Ascending aorta (tissue), 2 donors: ENCODE measurements at regions of chr12 and their contacts with region 1.

Region 1: GRCh38 chr12:12704593-12705230 is 8.7 kb upstream of the GPR19 start:
- DNase-seq: peak in 1 of 2 donors; percentile 80
- H3K4me3 ChIP-seq: no peak overlapping the region
- H3K27ac ChIP-seq: no peak overlapping the region
- H3K4me1 ChIP-seq: peaks cover 0 to 5% of the 10 kb centered on the region in 2 donors
- H3K27me3 ChIP-seq: no peaks in the 10 kb centered on the region
- CTCF ChIP-seq: peak; percentile 88 to 96 (median 90)

Region 2: GRCh38 chr12:11553871-11554533 is 1150.7 kb before region 1 on chr12:
- intact Hi-C with region 1: loop called (anchors 10 kb)
- DNase-seq: peak in 1 of 2 donors; percentile 78
- H3K4me3 ChIP-seq: no peak overlapping the region
- H3K27ac ChIP-seq: no peak overlapping the region
- H3K4me1 ChIP-seq: peaks cover 0 to 12% of the 10 kb centered on the region in 2 donors
- H3K27me3 ChIP-seq: no peaks in the 10 kb centered on the region
- CTCF ChIP-seq: peak; percentile 52 to 69 (median 52)

Region 3: DNA sequence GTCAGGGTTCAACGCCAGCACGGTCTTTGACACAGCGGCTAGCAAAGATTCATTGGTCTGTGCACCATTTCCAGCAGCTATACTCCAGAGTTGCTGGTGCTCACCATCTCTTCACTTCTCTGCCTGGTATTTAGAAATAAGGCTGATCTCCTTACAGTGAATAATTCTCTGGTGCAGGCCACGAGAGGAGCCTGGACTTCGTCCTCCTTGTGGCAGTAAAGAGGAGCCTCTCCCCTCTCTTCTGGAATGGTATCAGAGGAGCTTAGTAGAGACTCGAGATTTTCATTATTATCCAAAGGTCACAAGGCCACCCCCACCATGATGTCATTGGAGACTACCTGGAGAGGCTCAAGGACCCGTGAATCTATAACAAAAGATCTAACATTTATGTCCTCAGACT is 664.8 kb before region 1 on chr12:
- intact Hi-C with region 1: loop called (anchors 5 kb)
- DNase-seq: no peak
- H3K4me3 ChIP-seq: no peak overlapping the region
- H3K27ac ChIP-seq: no peak overlapping the region
- H3K4me1 ChIP-seq: no peaks in the 10 kb centered on the region
- H3K27me3 ChIP-seq: no peaks in the 10 kb centered on the region
- CTCF ChIP-seq: no peak

Region 4: GRCh38 chr12:12081836-12082497 is 622.7 kb before region 1 on chr12:
- intact Hi-C with region 1: loop called (anchors 5 kb)
- DNase-seq: no peak
- H3K4me3 ChIP-seq: no peak overlapping the region
- H3K27ac ChIP-seq: peak overlapping the region; percentile 64 to 74
- H3K4me1 ChIP-seq: no peaks in the 10 kb centered on the region
- H3K27me3 ChIP-seq: no peaks in the 10 kb centered on the region
- CTCF ChIP-seq: peak in 2 of 3 experiments; percentile 26 to 52

Region 5: DNA sequence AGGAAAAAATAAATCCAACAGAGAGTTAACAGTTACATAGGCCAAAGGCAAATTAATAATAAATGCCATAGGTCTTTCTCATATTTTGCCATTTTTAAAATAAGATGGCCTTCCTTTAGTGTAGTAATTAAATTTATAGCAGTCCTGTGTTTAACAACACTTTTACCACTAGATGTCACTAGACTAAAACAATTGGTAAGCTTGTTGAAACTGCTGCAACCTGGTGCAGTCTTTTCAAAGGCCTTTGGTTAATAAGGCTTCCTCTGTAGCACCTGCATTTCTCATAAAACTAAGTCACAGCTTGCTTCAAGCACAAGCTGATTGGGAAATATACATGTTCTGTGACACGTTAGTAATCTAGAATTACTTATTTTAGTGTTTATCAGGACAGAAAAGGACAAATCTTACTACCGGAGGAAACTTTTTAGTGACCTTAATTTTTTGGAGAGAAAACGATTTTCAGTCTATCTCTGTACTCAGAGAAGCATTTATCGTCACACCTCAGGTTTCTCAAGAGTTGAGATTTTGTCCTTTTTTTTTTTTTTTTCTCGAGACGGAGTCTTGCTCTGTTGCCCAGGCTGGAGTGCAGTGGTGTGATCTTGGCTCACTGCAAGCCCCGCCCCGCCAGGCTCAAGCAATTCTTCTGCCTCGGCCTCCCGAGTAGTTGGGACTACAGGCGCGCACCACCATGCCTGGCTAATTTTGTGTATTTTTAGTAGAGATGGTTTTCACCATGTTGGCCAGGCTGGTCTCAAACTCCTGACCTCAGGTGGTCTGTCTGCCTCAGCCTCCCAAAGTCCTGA is 327.9 kb before region 1 on chr12:
- intact Hi-C with region 1: loop called (anchors 1 kb)
- DNase-seq: no peak
- H3K4me3 ChIP-seq: no peak overlapping the region
- H3K27ac ChIP-seq: no peak overlapping the region
- H3K4me1 ChIP-seq: peaks cover 0 to 4% of the 10 kb centered on the region in 2 donors
- H3K27me3 ChIP-seq: no peaks in the 10 kb centered on the region
- CTCF ChIP-seq: peak; percentile 60 to 72 (median 66)

Region 6: DNA sequence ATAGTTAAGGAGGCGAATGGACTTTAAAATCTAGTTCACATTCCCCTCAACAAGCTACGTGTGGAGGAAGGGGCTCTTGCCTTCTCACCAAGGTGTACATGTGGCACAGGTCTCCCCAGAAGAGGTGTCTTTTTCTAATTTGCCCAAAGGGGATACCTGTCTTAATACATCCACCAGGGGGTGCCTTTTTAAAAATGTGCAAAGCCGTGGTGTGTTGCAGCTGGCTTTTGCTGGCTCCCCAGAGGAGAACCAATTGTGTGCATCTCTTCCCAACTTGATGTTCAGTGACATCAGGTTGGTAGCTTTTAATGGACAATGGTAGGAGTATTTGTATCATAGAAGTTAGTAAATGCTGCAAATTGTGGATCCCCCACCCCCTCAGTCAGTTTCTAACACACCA is 59.2 kb before region 1 on chr12:
- intact Hi-C with region 1: loop called (anchors 2 kb)
- DNase-seq: no peak
- H3K4me3 ChIP-seq: no peak overlapping the region
- H3K27ac ChIP-seq: no peak overlapping the region
- H3K4me1 ChIP-seq: no peaks in the 10 kb centered on the region
- H3K27me3 ChIP-seq: no peaks in the 10 kb centered on the region
- CTCF ChIP-seq: peak; percentile 8 to 42 (median 33)

Region 7: GRCh38 chr12:12736759-12737676 is 32.3 kb after region 1 on chr12:
- intact Hi-C with region 1: no loop called
- DNase-seq: peak in 1 of 2 donors; percentile 73
- H3K4me3 ChIP-seq: peak overlapping the region in 1 of 2 donors; percentile 27
- H3K27ac ChIP-seq: peak overlapping the region; percentile 57 to 60
- H3K4me1 ChIP-seq: peaks cover 0 to 22% of the 10 kb centered on the region in 2 donors
- H3K27me3 ChIP-seq: no peaks in the 10 kb centered on the region
- CTCF ChIP-seq: peak; percentile 39 to 62 (median 55)